GM10248 (cell line): ENCODE measurements at regions of chr7 and their contacts with region 1.

Region 1: DNA sequence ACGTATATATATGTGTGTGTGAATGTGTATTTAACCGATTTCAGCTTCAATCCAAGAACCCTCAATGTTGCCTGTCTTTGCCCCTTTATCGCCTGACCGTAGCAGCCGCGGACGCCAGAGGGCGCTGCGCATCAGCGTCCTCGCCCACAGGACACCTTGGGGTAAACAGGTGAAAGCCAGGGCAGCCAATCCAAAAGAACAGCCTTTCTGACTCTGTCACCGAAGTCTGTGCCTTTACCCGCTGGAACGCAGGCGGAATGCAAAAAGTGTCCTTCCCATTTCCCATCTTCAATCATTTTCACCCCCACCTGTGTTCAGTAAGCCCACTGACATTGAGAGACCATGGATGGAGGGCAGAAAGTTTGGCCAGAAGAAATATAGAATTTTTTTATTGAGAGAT is 3.6 kb downstream of the NXPH1 start:
- DNase-seq: peak; percentile 69
- CTCF ChIP-seq: peak; percentile 85

Region 2: DNA sequence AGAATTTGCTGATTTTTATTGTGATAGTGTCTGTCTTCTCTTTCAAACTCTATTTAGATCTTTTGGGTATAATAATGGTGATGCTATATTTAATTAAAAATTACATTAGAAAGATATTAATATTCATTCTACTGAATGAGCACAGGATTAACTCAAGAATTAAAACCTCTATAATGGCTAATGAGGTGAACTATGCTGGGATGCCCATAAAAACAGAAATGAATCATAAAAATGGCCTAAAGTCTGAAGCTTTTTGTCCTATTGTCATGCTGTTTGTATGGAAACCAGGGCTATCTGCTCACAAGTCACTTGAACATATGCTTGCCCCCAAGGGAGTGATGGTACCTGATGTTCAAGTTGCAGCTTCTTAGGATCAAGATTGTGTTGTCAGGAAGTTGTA is 98.8 kb before region 1 on chr7:
- CTCF ChIA-PET with region 1: no interaction called
- POLR2A ChIA-PET with region 1: no interaction called
- DNase-seq: no peak
- CTCF ChIP-seq: no peak

Region 3: DNA sequence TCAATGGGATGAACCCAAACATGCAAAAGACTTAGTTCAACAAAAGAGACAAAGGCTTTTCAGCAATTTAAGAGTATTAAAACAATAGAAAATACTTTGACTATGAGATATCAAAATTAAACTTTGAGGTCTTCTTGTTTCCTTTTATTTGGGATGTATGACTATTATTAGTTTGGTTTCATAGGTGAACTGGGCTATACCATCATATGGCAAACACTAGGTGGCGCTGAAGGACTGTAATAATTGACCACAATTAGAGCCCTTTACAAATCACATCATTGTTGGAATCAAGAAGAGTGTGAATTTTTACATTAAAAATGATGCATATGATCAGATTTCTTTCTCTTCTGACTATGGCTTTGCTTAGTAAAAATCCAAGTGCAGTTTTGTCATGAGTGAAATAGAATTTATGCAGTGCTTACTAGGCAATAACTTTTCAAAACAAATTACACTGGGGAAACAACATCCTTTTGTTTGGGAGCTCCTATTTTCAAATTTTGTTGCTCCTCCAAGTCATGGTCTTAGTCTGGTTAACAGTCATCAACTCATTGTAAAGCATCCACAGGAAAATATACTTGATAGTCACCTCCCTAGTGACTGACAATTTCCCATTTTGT is 18.2 kb before region 1 on chr7:
- CTCF ChIA-PET with region 1: interaction called, 10 read pairs
- POLR2A ChIA-PET with region 1: no interaction called
- DNase-seq: peak; percentile 35
- CTCF ChIP-seq: peak; percentile 69